ENCODE measurements at regions of chr2 and their contacts with region 1.

Region 1: GRCh38 chr2:20781656-20782265 is 41.1 kb downstream of the LDAH start:
- DNase-seq: peak; percentile 57
- H3K4me3 Mint-ChIP-seq: no peak overlapping the region
- H3K27ac Mint-ChIP-seq: no peak overlapping the region
- H3K4me1 Mint-ChIP-seq: no peaks in the 10 kb centered on the region
- H3K27me3 Mint-ChIP-seq: no peaks in the 10 kb centered on the region
- CTCF ChIP-seq: peak; percentile 64

Region 2: DNA sequence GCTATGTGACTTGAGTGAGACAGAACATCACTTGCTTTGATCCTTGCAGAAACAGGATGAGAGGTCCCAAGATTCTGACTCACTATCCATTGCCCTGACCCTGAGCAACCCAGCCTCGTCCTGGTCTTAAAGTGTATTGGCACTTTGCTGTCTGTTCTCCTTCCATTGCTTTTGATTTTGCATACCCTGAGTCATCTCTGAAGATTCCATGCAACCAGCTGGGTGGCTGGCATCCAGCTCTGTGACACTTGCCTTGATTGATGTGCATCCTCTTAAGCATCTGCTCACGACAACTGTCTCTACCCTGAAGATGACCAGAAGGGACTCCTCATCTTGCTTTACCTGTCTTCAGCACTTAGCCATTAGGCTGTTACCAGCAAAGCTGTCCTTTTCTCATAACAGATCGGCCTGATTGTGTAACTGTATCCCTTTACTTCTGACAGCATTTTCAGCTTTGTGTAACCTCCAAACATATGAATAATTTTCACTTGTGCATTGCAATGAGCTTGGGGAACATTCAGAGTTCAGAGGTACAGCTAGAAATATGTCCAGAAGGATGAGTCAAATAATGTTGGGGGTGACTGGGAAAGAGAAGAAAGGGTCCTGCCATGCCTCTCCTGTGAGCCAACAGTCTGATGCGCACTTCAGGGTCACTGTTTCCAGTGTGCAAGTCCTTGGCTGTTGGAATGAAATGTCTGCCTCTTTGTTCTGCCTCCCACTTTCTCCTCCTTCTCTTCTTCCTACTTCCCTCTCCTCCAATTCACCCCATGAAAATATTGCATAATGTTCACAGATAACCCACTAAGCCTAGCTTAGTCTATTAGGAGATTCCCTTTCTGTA is 1173.6 kb before region 1 on chr2:
- CTCF ChIA-PET with region 1: no interaction called
- POLR2A ChIA-PET with region 1: no interaction called
- intact Hi-C with region 1: no loop called
- DNase-seq: peak; percentile 68
- H3K4me3 Mint-ChIP-seq: no peak overlapping the region
- H3K27ac Mint-ChIP-seq: no peak overlapping the region
- H3K4me1 Mint-ChIP-seq: peaks cover 21% of the 10 kb centered on the region
- H3K27me3 Mint-ChIP-seq: no peaks in the 10 kb centered on the region
- CTCF ChIP-seq: no peak

Region 3: DNA sequence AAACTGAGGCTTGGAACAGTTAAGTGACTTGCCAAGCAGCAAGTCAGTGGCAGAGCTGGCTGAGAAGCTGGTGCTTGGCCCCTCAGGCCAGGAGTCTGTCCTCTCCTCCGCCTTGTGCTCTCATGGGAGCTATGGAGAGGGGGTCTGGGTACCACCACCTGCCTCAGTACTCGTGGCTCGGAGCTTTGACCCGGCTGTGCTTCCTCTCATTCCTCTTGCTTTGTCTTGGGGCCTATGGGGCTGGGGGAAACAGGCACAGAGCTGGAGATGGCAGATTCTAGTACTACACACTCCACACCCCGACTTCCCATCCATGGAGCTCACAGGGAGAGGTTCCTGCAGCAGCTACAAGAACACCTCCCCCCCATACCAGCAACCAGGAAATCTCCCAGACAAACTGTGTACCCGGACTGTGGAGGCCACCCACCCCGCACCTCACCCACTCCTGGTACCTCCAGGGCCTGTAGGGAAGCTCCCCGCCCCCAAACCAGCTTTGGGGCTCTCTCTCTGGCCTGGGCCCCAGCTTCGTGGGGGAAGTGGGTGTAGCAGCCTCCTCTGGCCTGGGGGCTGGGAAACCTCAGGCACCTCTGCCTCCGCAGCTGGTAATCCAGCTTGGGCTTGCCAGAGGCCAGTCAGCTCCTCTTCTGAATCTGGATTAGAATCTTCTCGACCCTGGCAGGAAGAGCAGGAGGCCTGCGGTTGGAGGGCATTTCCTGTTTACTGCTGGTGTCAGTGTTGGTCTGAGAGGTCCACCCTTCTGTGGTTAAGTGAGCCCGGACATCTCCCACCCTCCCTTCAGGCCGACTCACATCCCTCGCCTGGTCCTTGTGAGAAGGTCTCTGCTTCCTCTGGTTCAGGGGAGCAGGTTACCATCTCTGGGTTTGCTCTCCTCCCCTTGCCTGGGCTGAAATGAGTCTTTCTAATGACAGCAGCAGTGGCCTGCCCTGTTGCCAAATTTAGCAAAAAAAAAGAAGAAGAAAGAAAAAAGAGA is 357.2 kb before region 1 on chr2:
- CTCF ChIA-PET with region 1: no interaction called
- POLR2A ChIA-PET with region 1: no interaction called
- intact Hi-C with region 1: no loop called
- DNase-seq: peak; percentile 61
- H3K4me3 Mint-ChIP-seq: no peak overlapping the region
- H3K27ac Mint-ChIP-seq: peak overlapping the region; percentile 67
- H3K4me1 Mint-ChIP-seq: peaks cover 47% of the 10 kb centered on the region
- H3K27me3 Mint-ChIP-seq: no peaks in the 10 kb centered on the region
- CTCF ChIP-seq: no peak

Region 4: GRCh38 chr2:20650880-20651730 is 130.7 kb before region 1 on chr2 and contains the start of gene HS1BP3:
- CTCF ChIA-PET with region 1: interaction called, 12 read pairs
- POLR2A ChIA-PET with region 1: no interaction called
- intact Hi-C with region 1: no loop called
- DNase-seq: peak; percentile 81
- H3K4me3 Mint-ChIP-seq: peak within 1 kb of the TSS; percentile 82
- H3K27ac Mint-ChIP-seq: peak within 1 kb of the TSS; percentile 62
- H3K4me1 Mint-ChIP-seq: peaks cover 22% of the 10 kb centered on the region
- H3K27me3 Mint-ChIP-seq: peaks cover 12% of the 10 kb centered on the region
- CTCF ChIP-seq: peak; percentile 89
- total RNA-seq, gene HS1BP3: 10.0 and 25.1 TPM in 2 replicates

Region 5: DNA sequence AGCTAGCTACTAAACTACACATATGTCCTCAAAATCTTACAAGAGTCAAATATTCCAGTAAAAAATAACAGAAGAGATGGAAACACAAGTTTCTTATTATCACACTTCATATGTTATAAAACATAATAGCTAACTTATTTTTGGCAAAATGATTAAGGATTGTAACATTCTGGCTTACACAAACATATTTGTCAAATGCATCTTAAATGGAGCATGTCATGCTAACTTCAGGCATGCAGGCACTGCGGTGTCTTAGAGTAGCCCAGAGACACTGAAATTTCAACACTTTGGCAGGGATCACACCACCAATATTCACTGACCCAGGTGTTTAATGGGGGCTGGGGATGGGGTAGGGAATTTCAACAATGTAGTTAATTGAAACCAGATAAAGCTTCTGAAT is 10.5 kb before region 1 on chr2:
- CTCF ChIA-PET with region 1: interaction called, 44 read pairs
- POLR2A ChIA-PET with region 1: no interaction called
- intact Hi-C with region 1: no loop called
- DNase-seq: no peak
- H3K4me3 Mint-ChIP-seq: no peak overlapping the region
- H3K27ac Mint-ChIP-seq: no peak overlapping the region
- H3K4me1 Mint-ChIP-seq: no peaks in the 10 kb centered on the region
- H3K27me3 Mint-ChIP-seq: no peaks in the 10 kb centered on the region
- CTCF ChIP-seq: no peak

Region 6: GRCh38 chr2:20822535-20823490 is 41.1 kb after region 1 on chr2 and contains the start of gene LDAH:
- CTCF ChIA-PET with region 1: interaction called, 23 read pairs
- POLR2A ChIA-PET with region 1: interaction called, 4 read pairs
- intact Hi-C with region 1: no loop called
- DNase-seq: peak; percentile 80
- H3K4me3 Mint-ChIP-seq: peak within 1 kb of the TSS; percentile 94
- H3K27ac Mint-ChIP-seq: peak within 1 kb of the TSS; percentile 99
- H3K4me1 Mint-ChIP-seq: peaks cover 6% of the 10 kb centered on the region
- H3K27me3 Mint-ChIP-seq: no peaks in the 10 kb centered on the region
- CTCF ChIP-seq: no peak
- total RNA-seq, gene LDAH: 16.8 and 17.0 TPM in 2 replicates

Region 7: GRCh38 chr2:20939931-20940795 is 158.4 kb after region 1 on chr2:
- CTCF ChIA-PET with region 1: interaction called, 11 read pairs
- POLR2A ChIA-PET with region 1: no interaction called
- intact Hi-C with region 1: no loop called
- DNase-seq: no peak
- H3K4me3 Mint-ChIP-seq: no peak overlapping the region
- H3K27ac Mint-ChIP-seq: no peak overlapping the region
- H3K4me1 Mint-ChIP-seq: no peaks in the 10 kb centered on the region
- H3K27me3 Mint-ChIP-seq: peaks cover 28% of the 10 kb centered on the region
- CTCF ChIP-seq: no peak

Region 8: DNA sequence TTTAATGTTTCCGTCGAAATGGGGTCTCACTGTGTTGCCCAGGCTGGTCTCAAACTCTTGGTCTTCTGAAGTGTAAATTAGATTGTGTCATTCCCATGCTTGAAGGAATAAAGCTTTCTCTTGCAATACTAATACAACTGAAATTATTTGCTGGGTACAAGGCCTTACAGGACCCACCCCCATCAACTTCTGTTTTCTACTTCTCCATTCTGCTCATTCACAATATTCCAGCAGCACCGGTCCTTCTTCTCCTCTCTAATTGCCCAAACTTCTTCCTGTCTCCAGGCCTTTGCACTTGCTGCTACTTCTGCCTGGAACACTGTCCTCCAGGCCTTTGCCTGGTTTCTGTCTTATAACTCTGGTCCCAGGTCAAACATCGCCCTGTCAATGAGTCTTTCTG is 188.3 kb after region 1 on chr2:
- CTCF ChIA-PET with region 1: interaction called, 375 read pairs
- POLR2A ChIA-PET with region 1: no interaction called
- intact Hi-C with region 1: no loop called
- DNase-seq: no peak
- H3K4me3 Mint-ChIP-seq: no peak overlapping the region
- H3K27ac Mint-ChIP-seq: no peak overlapping the region
- H3K4me1 Mint-ChIP-seq: no peaks in the 10 kb centered on the region
- H3K27me3 Mint-ChIP-seq: peaks cover 24% of the 10 kb centered on the region
- CTCF ChIP-seq: no peak

Region 9: DNA sequence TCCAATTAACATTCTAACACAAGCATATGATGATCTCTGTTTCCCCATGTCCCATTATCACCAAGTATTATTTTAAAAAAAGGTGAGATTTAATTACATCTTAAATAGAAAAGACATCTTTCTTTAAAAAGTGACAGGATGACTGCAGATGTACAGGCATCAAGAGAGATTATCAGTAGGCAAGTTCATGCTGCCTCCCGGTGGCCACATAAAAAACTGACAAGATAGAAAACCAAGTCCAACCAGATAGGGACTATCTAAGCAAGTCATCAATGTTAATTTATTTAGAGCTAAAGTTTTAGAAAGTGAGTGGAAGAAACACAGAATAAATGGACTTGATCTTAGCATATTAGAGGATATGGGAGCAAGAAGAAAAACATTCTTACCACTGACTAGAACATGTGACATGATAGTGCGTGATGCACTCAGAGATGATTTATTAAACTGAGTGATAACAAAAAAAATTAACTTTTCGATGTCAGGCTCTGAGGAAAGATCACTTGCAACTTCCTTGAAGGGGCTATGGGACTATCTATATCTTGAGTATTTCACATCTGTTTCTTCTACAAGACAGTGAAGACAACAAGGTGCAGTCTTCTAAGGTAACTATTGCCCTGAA is 336.6 kb after region 1 on chr2:
- CTCF ChIA-PET with region 1: interaction called, 17 read pairs
- POLR2A ChIA-PET with region 1: no interaction called
- intact Hi-C with region 1: loop called (anchors 5 kb)
- DNase-seq: peak; percentile 40
- H3K4me3 Mint-ChIP-seq: no peak overlapping the region
- H3K27ac Mint-ChIP-seq: no peak overlapping the region
- H3K4me1 Mint-ChIP-seq: no peaks in the 10 kb centered on the region
- H3K27me3 Mint-ChIP-seq: peaks cover 57% of the 10 kb centered on the region
- CTCF ChIP-seq: peak; percentile 49

Region 10: DNA sequence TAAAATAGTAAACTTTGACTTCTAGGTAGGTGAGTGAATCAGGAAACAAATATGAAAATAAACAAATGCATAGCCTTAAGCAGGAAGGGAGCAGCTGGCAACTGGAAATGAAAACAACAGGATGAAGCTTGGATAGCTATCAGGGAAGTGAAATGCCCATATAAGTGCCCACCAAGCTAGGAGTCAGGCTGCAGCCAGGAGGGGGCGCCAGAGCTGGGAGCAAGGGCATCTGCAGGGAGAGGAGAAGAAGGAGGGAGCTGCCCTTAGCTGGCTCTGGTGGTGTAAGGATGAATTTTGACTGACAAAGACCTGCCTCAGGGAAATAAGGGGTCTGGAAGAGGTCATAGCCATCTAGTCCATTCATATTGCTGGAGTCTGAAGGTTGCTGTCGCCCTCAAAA is 640.3 kb after region 1 on chr2:
- CTCF ChIA-PET with region 1: no interaction called
- POLR2A ChIA-PET with region 1: no interaction called
- intact Hi-C with region 1: no loop called
- DNase-seq: peak; percentile 8
- H3K4me3 Mint-ChIP-seq: no peak overlapping the region
- H3K27ac Mint-ChIP-seq: no peak overlapping the region
- H3K4me1 Mint-ChIP-seq: no peaks in the 10 kb centered on the region
- H3K27me3 Mint-ChIP-seq: no peaks in the 10 kb centered on the region
- CTCF ChIP-seq: peak; percentile 44

Measured in MCF 10A (cell line).